Left ventricle myocardium superior (tissue), 1 donor: ENCODE measurements at regions of chr3 and their contacts with region 1.

Region 1: DNA sequence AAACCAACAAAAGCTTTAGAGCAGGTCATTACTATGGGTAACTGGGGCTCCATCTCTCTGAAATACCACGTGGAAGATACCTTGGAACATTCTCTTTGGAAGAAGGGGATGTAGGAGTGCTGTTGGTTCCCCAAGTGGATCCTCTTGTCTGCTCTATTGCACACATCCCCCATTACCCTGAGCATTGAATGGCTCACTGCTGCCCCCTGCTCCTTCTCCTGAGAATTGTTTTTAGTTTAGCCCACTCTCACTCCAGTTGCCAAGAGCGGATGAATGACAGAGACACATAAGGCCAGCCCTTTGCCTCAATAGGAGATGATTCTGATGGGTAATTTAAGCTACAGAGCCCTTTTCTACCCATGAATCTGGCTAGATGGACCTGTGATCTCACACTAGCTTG is 135.6 kb upstream of the SUCLG2 start:
- DNase-seq: no peak
- ATAC-seq: peak; percentile 51

Region 2: GRCh38 chr3:67384760-67385397 is 405.2 kb before region 1 on chr3:
- intact Hi-C with region 1: loop called (anchors 5 kb)
- DNase-seq: peak; percentile 39
- ATAC-seq: peak; percentile 81

Region 3: DNA sequence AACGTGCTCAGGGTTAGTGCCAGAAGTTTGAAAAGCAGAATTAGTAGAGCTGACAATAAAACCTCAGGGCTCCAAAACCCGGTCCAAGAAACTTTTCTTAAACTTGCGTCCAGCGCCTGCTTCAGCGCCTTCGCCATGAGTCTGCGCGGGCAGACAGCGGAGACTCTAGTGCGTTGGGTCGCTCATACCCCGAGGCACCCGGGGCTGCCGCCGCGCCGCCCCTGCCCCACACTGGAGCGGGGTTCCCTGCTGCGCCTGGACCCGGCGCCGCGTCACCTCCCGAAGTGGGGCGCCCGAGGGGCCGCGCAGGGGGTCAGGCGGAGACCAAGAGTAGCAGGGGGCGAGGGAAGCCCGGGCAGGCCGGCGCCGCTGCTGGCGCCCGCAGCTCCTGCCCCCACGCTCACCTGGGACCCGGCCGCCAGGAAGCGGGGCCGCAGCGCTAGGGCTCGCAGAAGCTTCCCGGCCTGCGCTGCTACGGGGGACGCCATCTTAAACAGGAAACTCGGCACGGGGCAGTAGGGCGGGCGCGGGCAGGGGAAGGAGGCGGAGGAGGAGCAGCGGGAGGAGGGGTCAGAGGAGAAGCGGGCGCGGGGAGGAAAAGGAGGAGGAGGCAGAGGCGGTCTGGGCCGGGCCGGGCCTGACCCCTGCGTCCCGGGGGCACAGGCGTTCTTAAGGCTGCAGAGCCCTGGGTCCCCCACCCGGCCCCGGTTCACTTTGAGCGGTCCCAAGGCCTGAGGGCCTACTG is 135.8 kb before region 1 on chr3 and contains the start of gene SUCLG2:
- intact Hi-C with region 1: no loop called
- DNase-seq: peak; percentile 94
- ATAC-seq: peak; percentile 99
- total RNA-seq, gene SUCLG2: 122 TPM